ENCODE measurements at regions of chr4 and their contacts with region 1.

Region 1: DNA sequence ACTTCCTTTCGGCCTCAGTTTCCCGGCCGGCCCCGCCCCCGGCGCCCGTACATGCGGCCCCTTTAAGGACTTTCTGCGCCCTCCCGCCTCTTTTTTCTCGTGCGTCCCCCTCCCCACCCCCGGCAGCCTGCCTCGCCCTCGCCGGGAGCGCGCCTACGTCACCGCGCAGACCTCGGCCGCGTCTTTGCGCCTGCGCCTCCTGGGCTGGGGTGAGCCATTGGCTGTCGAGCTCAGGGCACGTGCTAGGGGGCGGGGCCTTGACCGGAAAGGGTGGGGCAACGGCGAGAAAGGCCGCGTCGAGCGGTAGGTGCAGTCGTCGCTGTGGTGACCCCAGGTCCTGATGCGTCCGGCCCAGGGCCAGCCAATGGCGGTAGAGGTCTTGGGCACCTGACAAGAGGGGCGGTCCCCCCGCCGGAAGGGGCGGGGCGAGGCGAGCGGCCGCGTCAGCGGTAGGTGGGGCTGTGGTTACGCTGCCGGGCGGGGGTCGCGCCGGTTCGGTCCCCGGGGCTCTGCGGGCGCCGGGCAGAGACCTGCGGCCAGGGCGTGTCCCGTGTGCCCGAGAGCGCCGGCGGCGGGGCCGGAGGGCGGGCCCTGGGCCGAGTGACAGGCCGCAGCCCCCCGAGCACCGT is at the start of gene UVSSA:
- DNase-seq: peak; percentile 100
- H3K4me3 ChIP-seq: peak within 1 kb of the TSS; percentile 58 to 76 (median 69)
- H3K27ac ChIP-seq: peak within 1 kb of the TSS; percentile 97 to 100 (median 98)
- H3K4me1 ChIP-seq: peaks cover 0 to 45% (median 30%) of the 10 kb centered on the region in 4 donors
- H3K27me3 ChIP-seq: no peaks in the 10 kb centered on the region
- CTCF ChIP-seq: no peak
- EP300 ChIP-seq: peak in 1 of 4 donors; percentile 82
- POLR2A ChIP-seq: peak in 1 of 2 donors; percentile 17
- total RNA-seq, gene UVSSA: 7.1 to 17.4 (median 10.4) TPM

Region 2: DNA sequence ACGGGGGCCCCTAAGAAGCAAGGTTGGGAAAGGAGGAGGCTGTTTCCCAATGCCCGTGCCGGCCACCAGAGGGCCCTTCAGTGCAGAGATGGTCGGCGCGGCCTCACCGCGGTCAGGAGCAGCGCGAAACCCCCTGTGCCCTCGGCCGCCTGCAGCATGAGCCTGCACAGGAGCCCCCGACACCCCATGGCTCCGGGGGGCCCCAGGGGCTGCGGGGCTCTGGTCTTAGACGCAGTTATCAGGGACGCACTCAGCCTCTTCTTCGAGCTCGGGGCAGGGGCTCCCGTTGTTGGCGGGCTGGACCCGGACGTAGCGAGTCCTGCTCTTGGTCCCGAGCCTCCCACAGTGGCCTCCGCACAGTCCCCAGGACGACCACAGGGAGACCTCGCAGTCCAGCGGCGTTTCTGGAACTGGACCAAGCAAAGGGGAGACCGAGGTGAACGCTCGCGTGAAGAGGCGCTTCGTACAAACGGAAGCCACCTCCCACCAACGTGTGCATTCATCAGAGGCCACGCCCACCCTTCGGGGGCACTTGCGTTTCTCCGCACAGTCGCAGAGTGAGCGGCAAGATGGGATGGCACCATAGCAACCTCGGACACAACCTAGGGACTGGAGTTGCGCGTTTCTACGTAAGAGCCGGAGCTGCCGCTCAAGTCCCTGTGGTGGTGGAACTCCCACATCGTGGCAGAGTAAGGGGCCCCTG is 179.5 kb before region 1 on chr4:
- intact Hi-C with region 1: loop called (anchors 10 kb)
- DNase-seq: peak; percentile 92
- H3K4me3 ChIP-seq: peak overlapping the region; percentile 39 to 66 (median 59)
- H3K27ac ChIP-seq: peak overlapping the region; percentile 45 to 71 (median 66)
- H3K4me1 ChIP-seq: peaks cover 2 to 50% (median 35%) of the 10 kb centered on the region in 4 donors
- H3K27me3 ChIP-seq: peaks cover 20 to 27% (median 25%) of the 10 kb centered on the region in 3 donors
- CTCF ChIP-seq: peak; percentile 87 to 94 (median 92)
- EP300 ChIP-seq: no peak
- POLR2A ChIP-seq: no peak

Region 3: GRCh38 chr4:1249148-1249730 is 97.7 kb before region 1 on chr4:
- intact Hi-C with region 1: loop called (anchors 1 kb)
- DNase-seq: peak; percentile 93
- H3K4me3 ChIP-seq: peak overlapping the region; percentile 42 to 98 (median 74)
- H3K27ac ChIP-seq: peak overlapping the region; percentile 88 to 99 (median 94)
- H3K4me1 ChIP-seq: peaks cover 0 to 55% (median 52%) of the 10 kb centered on the region in 4 donors
- H3K27me3 ChIP-seq: no peaks in the 10 kb centered on the region
- CTCF ChIP-seq: no peak
- EP300 ChIP-seq: no peak
- POLR2A ChIP-seq: no peak

Region 4: DNA sequence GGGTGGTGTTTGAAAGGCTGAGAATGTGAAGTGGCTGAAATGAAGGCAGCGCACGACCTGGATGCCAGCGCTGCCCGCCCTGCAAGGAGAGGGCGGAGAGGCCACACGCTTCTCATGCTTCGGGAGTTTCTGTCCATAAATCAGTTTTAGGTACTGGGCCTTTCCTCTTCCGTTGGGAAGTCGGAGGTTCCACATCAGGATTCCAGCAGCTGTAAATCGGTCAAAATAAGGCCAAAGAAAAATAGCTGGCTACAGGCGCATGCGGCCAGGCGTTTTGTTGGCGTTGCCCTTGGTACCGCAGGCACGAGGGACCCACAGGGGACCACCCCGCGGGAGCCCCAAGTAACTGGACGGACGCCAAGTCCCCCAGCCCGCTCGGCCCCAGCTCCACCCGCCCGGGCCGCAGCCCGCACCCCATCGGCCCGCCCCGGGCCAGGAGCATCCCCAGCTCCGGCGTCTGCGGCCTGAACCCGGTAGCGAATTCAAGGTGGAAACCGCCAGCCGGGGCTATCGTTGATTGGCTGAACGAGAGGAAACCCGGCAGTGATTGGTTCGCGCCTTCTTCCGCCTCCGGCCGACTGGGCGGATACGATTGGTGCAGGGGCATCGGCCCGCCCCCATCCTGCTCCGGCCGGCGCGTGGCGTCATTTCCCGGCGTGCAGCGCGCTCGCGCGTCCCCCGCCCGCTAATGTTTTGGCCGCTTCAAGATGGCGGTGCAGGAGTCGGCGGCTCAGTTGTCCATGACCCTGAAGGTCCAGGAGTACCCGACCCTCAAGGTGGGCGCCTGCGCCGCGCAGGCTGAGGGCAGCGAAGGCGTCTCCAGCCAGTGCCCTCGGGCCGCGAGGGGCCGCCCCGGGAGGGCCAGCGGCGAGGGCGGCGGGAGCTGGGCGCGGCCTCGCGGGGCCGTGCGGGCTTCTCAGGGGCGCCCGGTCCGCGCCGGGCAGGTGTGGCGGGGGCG is 57.4 kb before region 1 on chr4 and contains the start of gene MAEA:
- intact Hi-C with region 1: loop called (anchors 1 kb)
- DNase-seq: peak; percentile 98
- H3K4me3 ChIP-seq: peak within 1 kb of the TSS; percentile 85 to 99 (median 94)
- H3K27ac ChIP-seq: peak within 1 kb of the TSS; percentile 84 to 94 (median 88)
- H3K4me1 ChIP-seq: peaks cover 0 to 48% (median 41%) of the 10 kb centered on the region in 4 donors
- H3K27me3 ChIP-seq: no peaks in the 10 kb centered on the region
- CTCF ChIP-seq: no peak
- EP300 ChIP-seq: peak in 1 of 4 donors; percentile 12
- POLR2A ChIP-seq: peak; percentile 53 to 69
- total RNA-seq, gene MAEA: 44.2 to 56.2 (median 49.6) TPM

Region 5: DNA sequence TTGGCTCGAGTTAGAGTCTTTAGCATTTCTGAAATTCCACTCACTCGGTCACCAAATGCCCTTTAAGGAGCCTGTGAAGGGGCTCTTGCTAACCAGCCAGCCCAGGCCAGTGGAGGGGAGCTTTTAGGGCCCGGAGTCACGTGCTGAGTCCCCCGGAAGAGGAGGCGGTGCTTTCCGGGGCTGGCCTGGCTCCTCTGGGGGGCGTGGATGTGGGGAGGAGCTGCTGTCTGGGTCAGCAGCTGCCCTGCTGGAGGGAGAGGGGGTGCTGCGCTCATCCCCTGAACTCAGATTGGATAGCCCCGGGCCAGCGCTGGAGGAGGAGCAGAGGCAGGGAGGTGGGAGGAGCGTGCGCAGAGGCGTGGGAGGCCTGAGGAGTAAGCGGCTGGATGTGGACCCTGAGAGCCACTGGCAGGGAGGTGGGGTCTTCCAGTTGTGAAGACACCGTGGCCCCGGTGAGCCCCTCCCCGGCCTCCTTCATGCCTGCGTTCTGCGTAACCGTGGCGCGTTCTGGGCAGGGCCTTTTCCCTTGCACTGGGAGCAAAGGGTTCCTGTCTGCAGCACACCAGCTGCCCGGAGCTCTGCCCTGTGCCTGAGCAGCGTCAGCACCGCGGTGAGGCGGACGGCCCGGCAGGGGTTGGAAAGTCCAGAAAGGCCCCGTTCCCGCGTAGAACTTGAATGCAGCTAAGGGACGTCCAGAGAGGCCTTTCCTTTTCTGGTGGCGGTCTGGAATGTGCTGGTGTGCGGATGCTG is 37.5 kb before region 1 on chr4:
- intact Hi-C with region 1: loop called (anchors 2 kb)
- DNase-seq: peak; percentile 97
- H3K4me3 ChIP-seq: peak overlapping the region; percentile 9 to 49 (median 44)
- H3K27ac ChIP-seq: peak overlapping the region; percentile 75 to 80 (median 78)
- H3K4me1 ChIP-seq: peaks cover 0 to 44% (median 30%) of the 10 kb centered on the region in 4 donors
- H3K27me3 ChIP-seq: no peaks in the 10 kb centered on the region
- CTCF ChIP-seq: no peak
- EP300 ChIP-seq: no peak
- POLR2A ChIP-seq: no peak

Region 6: GRCh38 chr4:1579901-1580691 is 233.2 kb after region 1 on chr4:
- intact Hi-C with region 1: loop called (anchors 2 kb)
- DNase-seq: peak; percentile 97
- H3K4me3 ChIP-seq: peak overlapping the region; percentile 42 to 73 (median 56)
- H3K27ac ChIP-seq: peak overlapping the region; percentile 71 to 85 (median 79)
- H3K4me1 ChIP-seq: peaks cover 0 to 26% (median 24%) of the 10 kb centered on the region in 4 donors
- H3K27me3 ChIP-seq: peaks cover 6 to 33% (median 28%) of the 10 kb centered on the region in 3 donors
- CTCF ChIP-seq: no peak
- EP300 ChIP-seq: no peak
- POLR2A ChIP-seq: peak; percentile 14 to 24

Region 7: DNA sequence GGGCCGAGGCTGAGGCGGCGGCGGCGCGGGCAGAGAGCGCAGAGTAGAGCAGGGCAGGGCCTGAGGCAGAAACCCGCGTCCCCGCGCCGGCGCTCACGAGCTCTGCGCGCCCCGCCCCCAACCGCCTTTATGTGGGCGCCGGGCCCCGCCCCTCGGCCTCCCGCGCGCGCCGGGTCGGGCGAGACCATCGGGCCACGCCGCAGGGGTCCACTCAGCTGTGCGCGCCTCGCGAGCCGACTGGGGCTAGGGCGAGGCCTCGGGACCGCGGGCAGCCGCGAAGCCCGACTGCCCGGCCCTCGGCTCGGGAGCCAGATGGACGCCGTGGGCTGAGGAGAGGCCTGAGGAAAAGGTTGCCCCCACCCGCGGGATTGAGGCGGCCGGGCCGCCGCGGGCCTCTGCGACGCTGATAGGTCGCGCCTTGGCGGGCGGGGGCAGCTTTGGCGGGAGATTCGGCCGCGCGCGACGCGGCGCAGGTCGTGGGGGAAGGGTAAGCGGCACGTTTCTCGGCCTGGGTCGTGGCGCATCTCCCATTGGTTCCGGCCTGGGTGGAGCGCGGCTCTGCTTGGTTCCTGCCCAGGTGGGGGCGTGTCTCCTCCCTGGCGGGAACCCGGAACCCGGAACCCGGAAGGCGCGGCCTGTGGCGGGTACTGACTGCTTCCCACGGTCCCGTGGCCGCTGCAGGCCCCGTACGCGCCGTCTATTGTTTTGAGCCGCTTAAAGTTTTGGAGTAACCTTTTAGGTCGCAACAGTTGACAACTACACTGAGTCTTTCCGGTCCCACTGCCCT is 365.5 kb after region 1 on chr4 and contains the start of gene SLBP:
- intact Hi-C with region 1: loop called (anchors 5 kb)
- DNase-seq: peak; percentile 98
- H3K4me3 ChIP-seq: peak within 1 kb of the TSS; percentile 76 to 98 (median 83)
- H3K27ac ChIP-seq: peak within 1 kb of the TSS; percentile 97 to 100 (median 99)
- H3K4me1 ChIP-seq: peaks cover 0 to 52% (median 37%) of the 10 kb centered on the region in 4 donors
- H3K27me3 ChIP-seq: no peaks in the 10 kb centered on the region
- CTCF ChIP-seq: no peak
- EP300 ChIP-seq: peak in 1 of 4 donors; percentile 42
- POLR2A ChIP-seq: no peak
- total RNA-seq, gene SLBP: 32.3 to 48.9 (median 40.2) TPM

Measured in sigmoid colon (tissue), 7 donors.